ENCODE measurements at regions of chr3 and their contacts with region 1.

Region 1: GRCh38 chr3:17742108-17742879 is at the start of gene TBC1D5:
- DNase-seq: peak; percentile 82 to 99 (median 98)
- ATAC-seq: peak; percentile 85
- H3K4me3 ChIP-seq: peak within 1 kb of the TSS; percentile 70
- H3K27ac ChIP-seq: peak within 1 kb of the TSS; percentile 93
- H3K4me1 ChIP-seq: peaks cover 25 to 37% of the 10 kb centered on the region in 2 experiments
- H3K27me3 ChIP-seq: no peaks in the 10 kb centered on the region
- CTCF ChIP-seq: 0 out of 6 replicates have a peak, but pooled peaks of 1 of the 3 experiments have one; percentile 3
- EP300 ChIP-seq: peak; percentile 63
- POLR2A ChIP-seq: peak; percentile 92
- RAD21 ChIP-seq: no peak
- polyA plus RNA-seq, gene TBC1D5: 2.9 to 5.1 TPM

Region 2: GRCh38 chr3:17632401-17633100 is 109.7 kb before region 1 on chr3:
- CTCF ChIA-PET with region 1: no interaction called
- POLR2A ChIA-PET with region 1: no interaction called
- in situ Hi-C with region 1: no loop called
- intact Hi-C with region 1: loop called (anchors 5 kb)
- DNase-seq: peak; percentile 17 to 85 (median 39)
- ATAC-seq: peak; percentile 94
- H3K4me3 ChIP-seq: no peak overlapping the region
- H3K27ac ChIP-seq: peak overlapping the region; percentile 28; the same call in 1 of the 3 replicates
- H3K4me1 ChIP-seq: peaks cover 3 to 10% of the 10 kb centered on the region in 2 experiments; a peak in 4 of 5 replicates
- H3K27me3 ChIP-seq: no peaks in the 10 kb centered on the region
- CTCF ChIP-seq: no peak
- EP300 ChIP-seq: peak; percentile 39; the same call in 1 of the 2 replicates
- POLR2A ChIP-seq: no peak
- RAD21 ChIP-seq: no peak

Region 3: GRCh38 chr3:17730318-17730967 is 11.9 kb before region 1 on chr3:
- CTCF ChIA-PET with region 1: no interaction called
- POLR2A ChIA-PET with region 1: interaction called, 16 read pairs
- in situ Hi-C with region 1: no loop called
- intact Hi-C with region 1: loop called (anchors 1 kb)
- DNase-seq: peak in 2 of 4 experiments; percentile 86 to 98
- ATAC-seq: peak; percentile 94
- H3K4me3 ChIP-seq: no peak overlapping the region
- H3K27ac ChIP-seq: peak overlapping the region; percentile 75
- H3K4me1 ChIP-seq: peaks cover 30 to 42% of the 10 kb centered on the region in 2 experiments
- H3K27me3 ChIP-seq: no peaks in the 10 kb centered on the region
- CTCF ChIP-seq: 0 out of 6 replicates have a peak, but pooled peaks of 1 of the 3 experiments have one; percentile 2
- EP300 ChIP-seq: peak; percentile 97
- POLR2A ChIP-seq: no peak
- RAD21 ChIP-seq: peak in 1 of 2 experiments; percentile 40; a peak in 2 of 4 replicates

Region 4: GRCh38 chr3:17771177-17772017 is 29.1 kb after region 1 on chr3:
- CTCF ChIA-PET with region 1: no interaction called
- POLR2A ChIA-PET with region 1: no interaction called
- in situ Hi-C with region 1: no loop called
- intact Hi-C with region 1: loop called (anchors 2 kb)
- DNase-seq: peak; percentile 45 to 89 (median 70)
- ATAC-seq: peak; percentile 94
- H3K4me3 ChIP-seq: no peak overlapping the region
- H3K27ac ChIP-seq: peak overlapping the region; percentile 46
- H3K4me1 ChIP-seq: peaks cover 0 to 23% of the 10 kb centered on the region in 2 experiments; a peak in 3 of 5 replicates
- H3K27me3 ChIP-seq: no peaks in the 10 kb centered on the region
- CTCF ChIP-seq: no peak
- EP300 ChIP-seq: peak; percentile 84
- POLR2A ChIP-seq: no peak
- RAD21 ChIP-seq: 0 out of 4 replicates have a peak, but pooled peaks have one; percentile 8 to 13

Measured in K562 (cell line).